ENCODE measurements at regions of chr14 and their contacts with region 1.

Region 1: GRCh38 chr14:24013654-24014514 is 25.2 kb downstream of the DHRS4L2 start:
- DNase-seq: peak; percentile 66
- H3K4me3 Mint-ChIP-seq: no peak overlapping the region
- H3K27ac Mint-ChIP-seq: no peak overlapping the region
- H3K4me1 Mint-ChIP-seq: peaks cover 25% of the 10 kb centered on the region
- H3K27me3 Mint-ChIP-seq: no peaks in the 10 kb centered on the region

Region 2: DNA sequence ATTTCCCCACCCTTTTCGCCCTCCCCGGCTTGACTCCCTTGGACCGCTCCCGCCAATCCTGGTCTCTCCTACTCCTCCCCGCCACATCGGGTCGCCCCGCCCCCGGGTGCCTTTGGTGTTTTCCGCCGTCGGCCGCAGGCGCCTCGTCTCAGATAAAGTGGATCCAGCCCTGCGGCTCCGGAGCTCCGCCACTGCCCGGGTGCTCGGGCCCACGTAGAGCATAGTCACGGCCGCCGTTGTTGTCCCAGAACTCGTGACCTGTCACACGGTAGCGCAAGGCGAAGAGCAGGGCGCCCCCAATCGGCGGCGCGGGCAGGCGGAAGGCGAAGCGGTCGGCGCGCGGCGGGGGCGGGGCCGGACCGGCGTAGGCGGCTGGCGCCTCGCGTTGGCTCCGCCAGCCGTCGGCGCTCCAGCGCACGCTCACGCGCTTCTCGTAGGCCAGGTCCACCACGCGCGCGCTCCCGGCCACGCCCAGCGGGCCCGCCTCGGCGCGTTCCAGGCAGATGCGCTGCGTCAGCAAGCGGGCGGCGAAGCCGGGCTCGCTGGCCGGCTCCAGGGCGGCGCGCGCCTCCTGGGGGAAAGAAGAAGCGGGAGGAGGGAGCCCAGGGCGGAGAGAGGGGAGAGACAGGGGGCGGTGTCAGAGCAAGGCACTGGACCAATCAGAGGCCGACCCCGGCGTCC is 712.5 kb before region 1 on chr14:
- CTCF ChIA-PET with region 1: no interaction called
- intact Hi-C with region 1: no loop called
- DNase-seq: peak; percentile 96
- H3K4me3 Mint-ChIP-seq: peak overlapping the region; percentile 90
- H3K27ac Mint-ChIP-seq: peak overlapping the region; percentile 92
- H3K4me1 Mint-ChIP-seq: peaks cover 12% of the 10 kb centered on the region
- H3K27me3 Mint-ChIP-seq: peaks cover 13% of the 10 kb centered on the region

Region 3: GRCh38 chr14:23704890-23705289 is 309.0 kb before region 1 on chr14:
- CTCF ChIA-PET with region 1: no interaction called
- intact Hi-C with region 1: no loop called
- DNase-seq: no peak
- H3K4me3 Mint-ChIP-seq: no peak overlapping the region
- H3K27ac Mint-ChIP-seq: no peak overlapping the region
- H3K4me1 Mint-ChIP-seq: no peaks in the 10 kb centered on the region
- H3K27me3 Mint-ChIP-seq: peaks cover 12% of the 10 kb centered on the region

Region 4: GRCh38 chr14:24036169-24036962 is 22.5 kb after region 1 on chr14:
- CTCF ChIA-PET with region 1: interaction called, 4 read pairs
- intact Hi-C with region 1: loop called (anchors 1 kb)
- DNase-seq: peak; percentile 78
- H3K4me3 Mint-ChIP-seq: peak overlapping the region; percentile 91
- H3K27ac Mint-ChIP-seq: peak overlapping the region; percentile 83
- H3K4me1 Mint-ChIP-seq: peaks cover 5% of the 10 kb centered on the region
- H3K27me3 Mint-ChIP-seq: no peaks in the 10 kb centered on the region

Region 5: GRCh38 chr14:24058260-24058950 is 44.5 kb after region 1 on chr14:
- CTCF ChIA-PET with region 1: interaction called, 6 read pairs
- intact Hi-C with region 1: loop called (anchors 1 kb)
- DNase-seq: peak; percentile 89
- H3K4me3 Mint-ChIP-seq: no peak overlapping the region
- H3K27ac Mint-ChIP-seq: peak overlapping the region; percentile 38
- H3K4me1 Mint-ChIP-seq: peaks cover 5% of the 10 kb centered on the region
- H3K27me3 Mint-ChIP-seq: peaks cover 2% of the 10 kb centered on the region

Region 6: GRCh38 chr14:24108336-24108874 is 94.5 kb after region 1 on chr14:
- CTCF ChIA-PET with region 1: interaction called, 5 read pairs
- intact Hi-C with region 1: loop called (anchors 1 kb)
- DNase-seq: no peak
- H3K4me3 Mint-ChIP-seq: peak overlapping the region; percentile 50
- H3K27ac Mint-ChIP-seq: peak overlapping the region; percentile 97
- H3K4me1 Mint-ChIP-seq: peaks cover 10% of the 10 kb centered on the region
- H3K27me3 Mint-ChIP-seq: no peaks in the 10 kb centered on the region

Region 7: DNA sequence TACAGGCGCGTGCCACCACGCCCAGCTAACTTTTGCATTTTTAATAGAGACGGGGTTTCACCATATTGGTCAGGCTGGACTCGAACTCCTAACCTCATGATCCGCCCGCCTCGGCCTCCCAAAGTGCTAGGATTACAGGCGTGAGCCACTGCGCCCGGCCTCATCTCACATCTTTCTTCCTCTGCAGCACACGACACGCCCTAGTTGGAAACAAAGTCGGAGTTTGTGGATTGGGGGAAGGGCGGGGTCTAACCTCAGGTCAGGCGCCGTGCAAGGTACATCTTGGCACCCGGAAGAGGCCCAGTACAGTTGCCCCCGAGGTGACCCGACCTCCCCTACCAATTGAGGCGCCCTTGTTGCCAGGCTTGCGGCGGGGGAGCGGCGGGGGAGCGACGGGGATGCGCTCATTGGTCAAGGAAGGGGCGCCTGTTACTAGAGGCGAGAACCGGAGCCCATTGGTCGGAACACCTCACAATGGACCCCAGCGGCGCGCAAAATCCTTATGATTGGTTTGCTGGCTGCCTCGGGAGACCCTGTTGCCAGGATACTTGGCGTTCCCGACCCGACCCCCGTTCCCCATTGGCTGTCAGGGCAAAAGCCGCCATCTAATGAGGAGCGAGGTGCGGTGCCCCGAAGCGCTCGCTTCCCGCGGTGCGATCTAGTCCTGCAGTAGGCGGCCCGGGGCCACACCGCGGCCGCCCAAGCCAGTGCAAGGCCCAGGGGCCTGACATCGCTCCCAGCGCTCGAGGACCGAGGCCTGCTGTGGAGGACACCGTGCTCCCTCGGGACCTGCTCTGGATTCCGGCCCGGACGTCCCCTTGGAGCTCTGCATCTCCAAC is 157.8 kb after region 1 on chr14 and contains the start of gene REC8:
- CTCF ChIA-PET with region 1: no interaction called
- intact Hi-C with region 1: no loop called
- DNase-seq: peak; percentile 72
- H3K4me3 Mint-ChIP-seq: peak within 1 kb of the TSS; percentile 70
- H3K27ac Mint-ChIP-seq: peak within 1 kb of the TSS; percentile 75
- H3K4me1 Mint-ChIP-seq: peaks cover 22% of the 10 kb centered on the region
- H3K27me3 Mint-ChIP-seq: no peaks in the 10 kb centered on the region
- total RNA-seq, gene REC8: 19.3 to 22.3 TPM

Measured in activated naive CD4-positive, alpha-beta T cell treated with anti-CD3 and anti-CD28 coated beads for 36 hours (primary cell).